Activated CD4-positive, alpha-beta memory T cell treated with anti-CD3 and anti-CD28 coated beads, Interleukin-2, amount 10 ng/mL, durations not matched to agents 7 days and 5 days (primary cell): ENCODE measurements at regions of chr3 and their contacts with region 1.

Region 1: DNA sequence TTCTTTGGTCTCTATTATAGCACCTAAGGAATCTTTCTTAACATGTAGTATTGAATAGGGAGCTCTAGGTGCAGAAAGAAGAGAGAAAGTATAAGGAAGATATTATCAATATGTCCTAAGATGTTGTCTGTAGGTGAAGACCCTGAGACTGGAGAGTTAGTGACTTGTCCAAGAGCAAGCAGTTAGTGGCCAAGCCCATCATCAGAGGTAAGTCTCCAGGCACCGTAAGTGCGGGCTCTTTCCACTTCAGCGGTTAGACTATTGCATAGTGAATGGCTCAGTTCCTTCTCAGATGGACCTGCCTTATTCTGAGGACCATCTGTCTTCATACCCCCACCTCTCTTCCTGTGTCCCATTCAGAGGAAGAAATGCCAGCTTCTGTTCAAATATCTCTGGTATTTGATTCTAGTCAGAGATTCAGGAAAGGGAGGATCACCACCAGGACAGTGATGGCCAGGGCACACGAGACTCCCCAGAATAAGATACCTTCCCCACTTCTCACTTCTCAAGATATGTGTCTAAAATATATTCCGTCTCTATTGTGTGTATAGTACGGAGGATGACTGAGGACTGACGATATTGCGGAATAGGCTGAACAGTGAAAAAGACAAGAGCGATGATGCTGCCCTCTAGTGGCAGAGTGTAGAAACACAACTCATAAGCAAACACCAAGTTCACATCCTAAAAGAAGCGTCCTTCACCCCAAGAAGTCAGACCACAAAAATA is 19.1 kb upstream of the ADGRG7 start:
- DNase-seq: peak; percentile 64
- H3K4me3 Mint-ChIP-seq: no peak overlapping the region
- H3K27ac Mint-ChIP-seq: no peak overlapping the region
- H3K4me1 Mint-ChIP-seq: peaks cover 3% of the 10 kb centered on the region
- H3K27me3 Mint-ChIP-seq: peaks cover 6% of the 10 kb centered on the region

Region 2: GRCh38 chr3:100316641-100317069 is 273.6 kb before region 1 on chr3:
- CTCF ChIA-PET with region 1: interaction called, 35 read pairs
- POLR2A ChIA-PET with region 1: no interaction called
- DNase-seq: peak; percentile 43
- H3K4me3 Mint-ChIP-seq: no peak overlapping the region
- H3K27ac Mint-ChIP-seq: no peak overlapping the region
- H3K4me1 Mint-ChIP-seq: peaks cover 15% of the 10 kb centered on the region
- H3K27me3 Mint-ChIP-seq: no peaks in the 10 kb centered on the region